ENCODE measurements at regions of chr11 and their contacts with region 1.

Region 1: DNA sequence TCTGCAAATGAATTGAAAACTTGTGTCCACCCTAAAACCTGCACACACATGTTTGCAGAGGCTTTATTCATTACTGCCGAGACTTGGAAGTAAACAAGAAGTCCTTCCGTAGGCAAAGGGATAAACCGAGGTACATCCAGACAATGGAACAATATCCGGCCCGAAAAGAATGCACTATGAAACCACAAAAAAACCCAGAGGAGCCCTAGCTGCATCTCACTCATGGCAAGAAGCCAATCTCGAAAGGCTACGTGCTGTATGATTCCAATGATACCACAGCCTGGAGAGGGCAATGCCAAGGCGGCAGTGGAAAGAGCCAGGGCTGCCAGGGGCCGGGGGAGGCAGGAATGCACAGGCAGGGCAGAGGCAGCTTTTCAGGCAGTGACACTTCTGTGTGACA is 3.2 kb upstream of the MRPL23 start:
- DNase-seq: peak; percentile 44
- ATAC-seq: peak; percentile 28; the same call in 1 of the 2 replicates
- H3K4me3 ChIP-seq: peak overlapping the region; percentile 56
- H3K27ac ChIP-seq: no peak overlapping the region
- H3K4me1 ChIP-seq: 0 out of 2 replicates have a peak, but pooled peaks cover 4% of the 10 kb centered on the region
- H3K27me3 ChIP-seq: no peaks in the 10 kb centered on the region
- CTCF ChIP-seq: no peak

Region 2: GRCh38 chr11:1749414-1750312 is 194.3 kb before region 1 on chr11:
- CTCF ChIA-PET with region 1: no interaction called
- POLR2A ChIA-PET with region 1: no interaction called
- intact Hi-C with region 1: no loop called
- DNase-seq: peak; percentile 45
- ATAC-seq: peak; percentile 57
- H3K4me3 ChIP-seq: no peak overlapping the region
- H3K27ac ChIP-seq: no peak overlapping the region
- H3K4me1 ChIP-seq: no peaks in the 10 kb centered on the region
- H3K27me3 ChIP-seq: peaks cover 7% of the 10 kb centered on the region; the same call in 1 of the 2 replicates
- CTCF ChIP-seq: no peak

Region 3: DNA sequence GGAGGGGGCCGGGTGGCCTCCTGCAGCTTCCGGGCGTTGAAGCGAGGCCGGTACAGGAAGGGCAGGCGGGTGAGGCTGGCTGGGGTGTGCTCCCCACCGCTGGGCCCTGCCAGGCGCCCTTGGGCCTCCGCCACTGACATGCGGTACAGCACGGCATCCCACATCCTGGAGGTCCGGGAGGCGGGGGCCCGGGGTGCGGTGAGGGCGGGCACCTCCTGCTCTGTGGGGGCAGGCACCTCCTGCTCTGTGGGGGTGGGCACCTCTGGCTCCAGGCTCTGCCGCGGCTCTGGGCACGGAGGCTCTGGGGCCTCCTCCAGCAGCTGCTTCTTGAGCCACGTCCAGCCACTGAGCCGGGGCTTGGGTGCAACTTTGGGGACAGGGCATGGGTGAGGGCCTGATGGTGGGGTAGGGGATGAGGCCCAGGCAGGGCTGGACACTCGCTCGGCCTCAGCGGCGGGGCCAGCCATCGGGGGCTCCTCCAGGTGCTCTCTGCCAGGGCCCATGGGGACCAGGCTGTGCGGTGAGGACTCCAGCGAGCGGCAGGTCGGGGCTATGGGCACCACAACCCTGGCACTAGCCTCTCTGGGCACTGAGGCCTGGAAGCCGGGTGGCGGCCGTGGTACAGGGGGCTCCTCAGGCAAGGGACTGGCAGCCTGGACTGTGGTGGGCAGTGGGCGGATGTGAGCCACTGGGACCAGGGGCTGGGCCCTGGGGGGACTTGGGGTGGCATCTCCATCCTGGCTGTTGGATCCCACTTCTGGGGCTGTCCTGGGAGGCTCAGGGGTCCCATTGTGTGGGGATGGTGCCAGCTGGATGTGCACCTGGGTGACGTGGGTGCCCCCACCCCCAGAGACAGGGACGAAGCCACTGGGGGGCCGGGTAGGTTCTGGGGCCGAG is 54.5 kb before region 1 on chr11:
- CTCF ChIA-PET with region 1: no interaction called
- POLR2A ChIA-PET with region 1: no interaction called
- intact Hi-C with region 1: loop called (anchors 10 kb)
- DNase-seq: no peak
- ATAC-seq: no peak
- H3K4me3 ChIP-seq: no peak overlapping the region
- H3K27ac ChIP-seq: no peak overlapping the region
- H3K4me1 ChIP-seq: no peaks in the 10 kb centered on the region
- H3K27me3 ChIP-seq: no peaks in the 10 kb centered on the region; the same call in 1 of the 2 replicates
- CTCF ChIP-seq: no peak

Region 4: GRCh38 chr11:1959786-1960185 is 15.8 kb after region 1 on chr11:
- CTCF ChIA-PET with region 1: no interaction called
- POLR2A ChIA-PET with region 1: no interaction called
- intact Hi-C with region 1: no loop called
- DNase-seq: no peak
- ATAC-seq: no peak
- H3K4me3 ChIP-seq: no peak overlapping the region
- H3K27ac ChIP-seq: no peak overlapping the region
- H3K4me1 ChIP-seq: no peaks in the 10 kb centered on the region
- H3K27me3 ChIP-seq: no peaks in the 10 kb centered on the region
- CTCF ChIP-seq: no peak

Measured in PC-3 (cell line).